Heart left ventricle (tissue), 16 donors: ENCODE measurements at regions of chr2 and their contacts with region 1.

Region 1: GRCh38 chr2:38315707-38316333 is 61.3 kb downstream of the ATL2 start:
- DNase-seq: no peak
- ATAC-seq: peak in 3 of 4 donors; percentile 61 to 73 (median 67)
- H3K4me3 ChIP-seq: no peak overlapping the region
- H3K27ac ChIP-seq: peak overlapping the region in 1 of 12 donors; percentile 64
- H3K4me1 ChIP-seq: peaks cover 0 to 9% (median 0%) of the 10 kb centered on the region in 12 donors
- H3K27me3 ChIP-seq: no peaks in the 10 kb centered on the region
- CTCF ChIP-seq: peak; percentile 64 to 91 (median 74)
- POLR2A ChIP-seq: no peak

Region 2: DNA sequence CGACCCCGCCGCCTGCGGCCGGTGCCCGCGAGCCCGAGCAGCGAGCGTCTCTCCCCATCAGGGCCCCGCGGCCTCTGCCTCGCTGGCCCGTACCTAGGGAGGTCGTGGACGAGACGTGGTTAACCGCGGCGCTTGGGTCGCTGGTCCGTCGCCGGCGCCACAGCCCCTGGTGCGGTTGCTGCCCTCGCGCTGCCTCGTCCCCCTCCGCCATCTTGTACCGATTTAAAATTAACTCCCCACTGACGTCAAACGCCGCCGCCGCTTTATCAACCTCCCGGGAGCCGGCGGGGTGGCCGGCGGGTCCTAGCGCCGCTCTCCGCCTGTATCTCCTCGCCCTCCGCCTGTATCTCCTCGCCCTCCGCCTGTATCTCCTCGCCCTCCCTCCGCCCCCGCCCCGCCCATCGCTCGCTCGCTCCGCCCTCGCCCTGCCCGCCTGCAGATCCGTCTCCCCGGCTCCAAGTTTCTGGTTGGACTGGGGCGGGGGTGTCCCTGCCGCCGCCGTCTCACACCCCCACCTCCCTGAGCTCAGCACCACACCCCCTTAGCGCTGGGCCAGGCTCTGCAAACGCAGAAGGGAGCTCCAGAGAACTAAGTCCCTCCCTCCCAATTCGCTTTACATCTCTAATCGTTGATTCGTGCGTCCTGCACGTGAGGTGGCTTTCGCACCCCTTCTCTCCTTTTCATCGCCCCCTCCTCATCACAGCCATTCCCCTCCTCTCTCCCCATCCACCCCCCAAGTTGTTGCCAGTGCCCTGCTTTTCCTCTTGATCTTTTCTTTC is 61.4 kb after region 1 on chr2 and contains the start of gene ATL2:
- intact Hi-C with region 1: loop called in 5 of 10 experiments (anchors 5 to 10 kb)
- DNase-seq: peak; percentile 96 to 97 (median 97)
- ATAC-seq: peak; percentile 94 to 97 (median 95)
- H3K4me3 ChIP-seq: peak within 1 kb of the TSS; percentile 66 to 99 (median 81)
- H3K27ac ChIP-seq: peak within 1 kb of the TSS; percentile 95 to 100 (median 98)
- H3K4me1 ChIP-seq: peaks cover 3 to 48% (median 37%) of the 10 kb centered on the region in 12 donors
- H3K27me3 ChIP-seq: no peaks in the 10 kb centered on the region
- CTCF ChIP-seq: peak in 1 of 12 donors; percentile 12
- POLR2A ChIP-seq: peak; percentile 75 to 88
- total RNA-seq, gene ATL2: 25.7 to 41.9 (median 30.6) TPM

Region 3: GRCh38 chr2:38450509-38450908 is 134.7 kb after region 1 on chr2:
- intact Hi-C with region 1: loop called in 5 of 10 experiments (anchors 5 to 10 kb)
- DNase-seq: no peak
- ATAC-seq: no peak
- H3K4me3 ChIP-seq: no peak overlapping the region
- H3K27ac ChIP-seq: no peak overlapping the region
- H3K4me1 ChIP-seq: no peaks in the 10 kb centered on the region
- H3K27me3 ChIP-seq: no peaks in the 10 kb centered on the region
- CTCF ChIP-seq: no peak
- POLR2A ChIP-seq: no peak

Region 4: GRCh38 chr2:38508311-38509039 is 192.7 kb after region 1 on chr2:
- intact Hi-C with region 1: loop called in 7 of 10 experiments (anchors 1 to 10 kb)
- DNase-seq: peak; percentile 82 to 93 (median 86)
- ATAC-seq: peak; percentile 70 to 75 (median 74)
- H3K4me3 ChIP-seq: no peak overlapping the region
- H3K27ac ChIP-seq: peak overlapping the region in 6 of 12 donors; percentile 22 to 81 (median 32)
- H3K4me1 ChIP-seq: peaks cover 0 to 23% (median 8%) of the 10 kb centered on the region in 12 donors
- H3K27me3 ChIP-seq: no peaks in the 10 kb centered on the region
- CTCF ChIP-seq: peak; percentile 19 to 63 (median 41)
- POLR2A ChIP-seq: no peak

Region 5: DNA sequence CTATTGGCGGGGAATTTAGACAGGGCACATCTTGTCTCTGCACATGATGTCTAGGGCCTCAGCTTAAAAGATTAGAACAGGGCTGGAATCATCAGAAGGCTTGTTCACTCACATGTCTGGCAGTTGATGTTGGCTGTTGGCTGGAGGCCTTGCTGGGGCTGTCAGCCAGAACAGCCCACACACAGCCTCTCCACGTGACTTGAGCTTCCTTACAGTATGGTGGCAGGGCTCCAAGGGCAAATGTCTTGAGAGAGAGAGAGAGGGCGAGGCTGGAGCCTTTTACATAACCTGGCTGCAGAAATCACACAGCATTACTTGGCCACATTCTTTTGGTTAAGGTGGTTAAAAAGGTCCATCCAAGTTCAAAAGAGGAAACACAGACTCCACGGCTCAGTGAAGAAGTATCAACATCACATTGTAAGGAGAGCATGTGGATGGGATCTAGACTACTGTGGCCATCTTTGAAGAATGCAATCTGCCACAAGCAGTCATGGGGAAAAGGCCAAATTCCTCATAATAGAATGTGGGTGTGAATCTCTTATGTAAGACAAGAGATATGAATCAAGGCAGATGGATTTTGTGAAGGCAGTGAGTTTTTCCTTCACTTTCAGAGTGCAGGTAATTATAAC is 404.9 kb after region 1 on chr2:
- intact Hi-C with region 1: loop called in 2 of 10 experiments (anchors 5 to 10 kb)
- DNase-seq: peak; percentile 75 to 84 (median 80)
- ATAC-seq: peak; percentile 86 to 95 (median 94)
- H3K4me3 ChIP-seq: no peak overlapping the region
- H3K27ac ChIP-seq: peak overlapping the region; percentile 2 to 76 (median 48)
- H3K4me1 ChIP-seq: peaks cover 0 to 35% (median 21%) of the 10 kb centered on the region in 12 donors
- H3K27me3 ChIP-seq: no peaks in the 10 kb centered on the region
- CTCF ChIP-seq: no peak
- POLR2A ChIP-seq: no peak

Region 6: DNA sequence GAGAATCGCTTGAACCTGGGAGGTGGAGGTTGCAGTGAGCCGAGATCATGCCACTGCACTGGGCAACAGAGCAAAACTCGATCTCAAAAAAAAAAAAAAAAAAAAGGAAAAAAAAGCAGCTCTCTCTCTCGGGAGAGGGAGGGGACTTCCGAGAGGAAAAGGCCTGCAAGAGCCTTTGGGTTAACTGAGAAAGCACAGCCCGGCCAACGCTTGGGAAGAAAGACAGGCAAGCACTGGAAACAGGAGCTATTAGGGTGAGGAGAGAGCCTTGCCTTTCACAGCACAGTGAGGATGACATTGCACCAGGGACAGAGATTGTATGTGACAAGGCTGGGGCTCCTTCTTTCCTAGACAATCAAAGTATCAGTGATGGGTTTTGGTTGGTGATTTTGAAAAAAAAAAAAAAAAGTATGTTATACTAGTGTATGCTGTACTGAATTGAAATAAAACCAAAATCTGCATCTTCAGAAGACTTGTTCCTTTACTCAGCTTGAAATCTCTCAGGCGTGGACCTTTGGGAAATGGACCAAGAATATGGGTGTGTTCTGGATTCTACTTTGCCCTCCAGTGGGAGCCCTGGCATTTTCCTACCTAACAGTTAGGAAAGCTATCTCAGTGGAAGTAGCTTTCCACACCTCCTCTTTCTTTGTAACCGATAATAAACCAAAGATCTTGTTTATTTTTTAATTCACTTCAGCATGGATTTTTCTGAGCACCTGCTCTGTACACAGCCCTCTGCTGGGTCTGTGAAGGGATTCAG is 418.7 kb after region 1 on chr2:
- intact Hi-C with region 1: loop called in 6 of 10 experiments (anchors 5 to 10 kb)
- DNase-seq: peak in 2 of 5 donors; percentile 37 to 45
- ATAC-seq: peak in 2 of 4 donors; percentile 32 to 63
- H3K4me3 ChIP-seq: no peak overlapping the region
- H3K27ac ChIP-seq: peak overlapping the region in 3 of 12 donors; percentile 2 to 54 (median 16)
- H3K4me1 ChIP-seq: peaks cover 0 to 29% (median 11%) of the 10 kb centered on the region in 12 donors
- H3K27me3 ChIP-seq: no peaks in the 10 kb centered on the region
- CTCF ChIP-seq: no peak
- POLR2A ChIP-seq: no peak